Activated naive CD4-positive, alpha-beta T cell treated with anti-CD3 and anti-CD28 coated beads for 36 hours (primary cell): ENCODE measurements at regions of chr6 and their contacts with region 1.

Region 1: GRCh38 chr6:109816452-109817374 is 125.6 kb downstream of the FIG4 start:
- DNase-seq: no peak
- H3K4me3 Mint-ChIP-seq: no peak overlapping the region
- H3K27ac Mint-ChIP-seq: no peak overlapping the region
- H3K4me1 Mint-ChIP-seq: no peaks in the 10 kb centered on the region
- H3K27me3 Mint-ChIP-seq: no peaks in the 10 kb centered on the region

Region 2: DNA sequence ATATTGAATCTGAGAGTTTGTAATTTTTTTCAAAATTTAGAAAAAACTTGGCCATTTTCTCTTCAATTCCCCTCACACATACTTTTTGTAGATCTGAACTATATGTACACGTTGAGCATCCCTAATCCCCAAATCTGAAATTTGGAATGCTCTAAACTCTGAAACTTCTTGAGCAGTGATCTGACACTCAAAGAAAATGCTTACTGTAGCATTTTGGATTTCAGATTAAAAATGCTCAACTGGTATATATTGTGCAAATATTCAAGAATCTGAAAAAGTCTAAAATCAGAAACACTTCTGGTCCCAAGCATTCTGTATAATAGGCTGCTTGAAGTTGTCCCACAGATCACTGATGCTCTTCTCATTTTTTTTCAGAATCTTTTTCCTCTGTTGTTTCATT is 254.9 kb before region 1 on chr6:
- CTCF ChIA-PET with region 1: no interaction called
- intact Hi-C with region 1: no loop called
- DNase-seq: no peak
- H3K4me3 Mint-ChIP-seq: no peak overlapping the region
- H3K27ac Mint-ChIP-seq: no peak overlapping the region
- H3K4me1 Mint-ChIP-seq: no peaks in the 10 kb centered on the region
- H3K27me3 Mint-ChIP-seq: no peaks in the 10 kb centered on the region

Region 3: DNA sequence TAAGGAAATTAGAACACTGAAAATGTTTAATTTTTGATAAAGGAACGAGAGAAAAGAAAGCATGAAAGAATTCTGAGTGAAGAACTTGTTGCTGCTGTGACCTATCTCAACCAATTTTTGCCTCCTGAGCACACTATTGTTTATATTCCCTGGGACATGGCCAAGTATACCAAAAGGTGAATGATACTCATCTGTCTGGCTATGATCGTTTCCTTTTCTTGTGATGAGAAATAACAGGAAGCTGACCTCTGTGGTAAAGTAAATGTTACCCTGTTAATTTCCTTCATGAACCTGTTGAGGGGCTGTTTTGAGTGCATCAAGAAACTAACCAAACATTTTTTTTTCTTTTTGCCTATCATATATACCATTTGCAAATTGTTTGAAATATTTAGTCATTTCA is 56.5 kb before region 1 on chr6:
- CTCF ChIA-PET with region 1: no interaction called
- intact Hi-C with region 1: no loop called
- DNase-seq: no peak
- H3K4me3 Mint-ChIP-seq: no peak overlapping the region
- H3K27ac Mint-ChIP-seq: no peak overlapping the region
- H3K4me1 Mint-ChIP-seq: peaks cover 7% of the 10 kb centered on the region
- H3K27me3 Mint-ChIP-seq: no peaks in the 10 kb centered on the region

Region 4: GRCh38 chr6:109793793-109794192 is 22.9 kb before region 1 on chr6:
- CTCF ChIA-PET with region 1: no interaction called
- intact Hi-C with region 1: loop called (anchors 1 kb)
- DNase-seq: peak; percentile 56
- H3K4me3 Mint-ChIP-seq: no peak overlapping the region
- H3K27ac Mint-ChIP-seq: peak overlapping the region; percentile 65
- H3K4me1 Mint-ChIP-seq: peaks cover 5% of the 10 kb centered on the region
- H3K27me3 Mint-ChIP-seq: no peaks in the 10 kb centered on the region